MCF 10A (cell line): ENCODE measurements at regions of chr9 and their contacts with region 1.

Region 1: GRCh38 chr9:98823666-98824334 is 16.3 kb downstream of the GALNT12 start:
- DNase-seq: no peak
- H3K4me3 Mint-ChIP-seq: no peak overlapping the region
- H3K27ac Mint-ChIP-seq: no peak overlapping the region
- H3K4me1 Mint-ChIP-seq: no peaks in the 10 kb centered on the region
- H3K27me3 Mint-ChIP-seq: peaks cover 30% of the 10 kb centered on the region
- CTCF ChIP-seq: no peak

Region 2: DNA sequence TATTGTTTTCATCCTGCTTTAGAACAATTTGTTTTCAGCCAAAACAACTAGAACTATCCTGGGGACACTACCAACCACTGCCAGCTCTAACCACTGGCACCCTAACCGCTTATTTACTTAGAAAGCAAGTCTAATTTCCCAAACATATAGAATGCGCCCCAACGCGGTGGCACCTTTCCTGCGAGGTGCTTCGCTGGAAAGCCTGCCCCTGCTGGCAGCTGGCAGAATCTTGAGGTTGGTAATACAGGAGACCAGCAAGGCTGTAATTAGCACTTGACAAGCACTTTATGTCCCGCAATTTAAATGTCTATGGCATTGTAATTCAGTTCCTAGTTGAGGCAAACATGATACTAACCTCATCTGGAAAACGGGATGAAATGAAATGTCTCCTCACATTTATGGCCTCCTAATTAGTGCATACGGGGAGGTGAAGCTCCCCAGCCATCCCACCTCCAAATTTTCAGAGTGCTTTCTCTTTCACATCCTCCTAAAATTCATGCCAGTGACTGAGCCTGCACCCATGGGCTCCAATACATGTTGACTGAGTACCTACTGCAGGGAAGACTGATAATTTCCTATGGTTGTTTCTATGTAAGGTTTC is 145.5 kb before region 1 on chr9:
- CTCF ChIA-PET with region 1: no interaction called
- POLR2A ChIA-PET with region 1: no interaction called
- intact Hi-C with region 1: no loop called
- DNase-seq: peak; percentile 37
- H3K4me3 Mint-ChIP-seq: no peak overlapping the region
- H3K27ac Mint-ChIP-seq: no peak overlapping the region
- H3K4me1 Mint-ChIP-seq: no peaks in the 10 kb centered on the region
- H3K27me3 Mint-ChIP-seq: peaks cover 14% of the 10 kb centered on the region
- CTCF ChIP-seq: peak; percentile 45

Region 3: DNA sequence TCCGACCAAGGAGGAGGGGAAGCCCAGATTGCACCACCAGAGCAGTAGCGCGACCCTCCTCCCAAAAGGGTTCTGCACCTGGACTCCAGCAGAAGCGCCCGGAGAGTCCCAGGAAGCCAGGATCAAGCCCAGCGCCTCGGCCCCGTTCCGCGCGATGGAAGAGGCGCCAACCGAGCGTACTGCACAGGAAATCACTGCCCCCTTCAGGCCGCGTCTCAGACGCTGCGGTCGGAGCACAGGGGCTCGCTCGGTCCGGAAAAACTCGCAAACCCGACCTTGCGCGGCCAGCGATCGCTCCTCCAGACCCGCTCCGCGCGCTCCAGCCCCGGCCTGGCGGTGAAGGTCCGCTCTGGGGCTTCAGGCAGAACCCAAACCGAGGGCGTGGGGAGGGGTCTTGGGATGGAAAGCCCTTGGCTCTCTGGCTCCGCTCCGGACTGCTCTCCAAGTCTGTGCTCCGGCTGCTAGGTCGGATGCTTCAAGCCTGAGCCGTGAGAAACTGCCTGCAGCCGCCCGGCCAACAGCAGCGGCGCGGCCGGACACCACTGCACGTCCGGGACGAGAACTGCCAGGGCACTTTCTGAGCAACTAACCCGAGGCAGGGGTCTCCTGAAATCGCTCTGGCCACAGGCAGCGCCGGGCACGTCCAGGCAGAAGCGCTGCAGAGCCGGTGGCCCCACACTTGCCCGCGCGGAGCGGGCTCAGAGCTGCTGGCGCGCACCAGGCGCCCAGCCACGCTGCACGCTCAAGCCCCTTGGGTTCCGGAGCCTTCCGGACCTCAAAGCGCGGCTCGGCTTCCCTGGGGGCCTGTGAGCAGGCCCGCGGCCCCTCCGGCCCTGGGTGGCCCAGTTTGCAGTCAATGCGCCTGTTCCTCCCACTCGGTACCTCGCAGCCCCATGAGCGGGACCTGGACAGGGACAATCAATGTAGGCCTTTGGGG is 116.4 kb before region 1 on chr9:
- CTCF ChIA-PET with region 1: no interaction called
- POLR2A ChIA-PET with region 1: no interaction called
- intact Hi-C with region 1: no loop called
- DNase-seq: peak; percentile 30
- H3K4me3 Mint-ChIP-seq: no peak overlapping the region
- H3K27ac Mint-ChIP-seq: no peak overlapping the region
- H3K4me1 Mint-ChIP-seq: no peaks in the 10 kb centered on the region
- H3K27me3 Mint-ChIP-seq: peaks cover 55% of the 10 kb centered on the region
- CTCF ChIP-seq: peak; percentile 27

Region 4: GRCh38 chr9:98766586-98766985 is 57.2 kb before region 1 on chr9:
- CTCF ChIA-PET with region 1: no interaction called
- POLR2A ChIA-PET with region 1: no interaction called
- intact Hi-C with region 1: loop called (anchors 10 kb)
- DNase-seq: peak; percentile 69
- H3K4me3 Mint-ChIP-seq: no peak overlapping the region
- H3K27ac Mint-ChIP-seq: peak overlapping the region; percentile 70
- H3K4me1 Mint-ChIP-seq: peaks cover 21% of the 10 kb centered on the region
- H3K27me3 Mint-ChIP-seq: no peaks in the 10 kb centered on the region
- CTCF ChIP-seq: no peak

Region 5: GRCh38 chr9:99221621-99222415 is 398.0 kb after region 1 on chr9 and contains the starts of genes ALG2 and SEC61B:
- CTCF ChIA-PET with region 1: no interaction called
- POLR2A ChIA-PET with region 1: no interaction called
- intact Hi-C with region 1: no loop called
- DNase-seq: peak; percentile 92
- H3K4me3 Mint-ChIP-seq: peak within 1 kb of the TSS; percentile 98
- H3K27ac Mint-ChIP-seq: peak within 1 kb of the TSS; percentile 100
- H3K4me1 Mint-ChIP-seq: peaks cover 50% of the 10 kb centered on the region
- H3K27me3 Mint-ChIP-seq: no peaks in the 10 kb centered on the region
- CTCF ChIP-seq: no peak
- total RNA-seq, gene ALG2: 54.6 and 54.7 TPM in 2 replicates
- total RNA-seq, gene SEC61B: 238 and 324 TPM in 2 replicates

Region 6: GRCh38 chr9:99307851-99308250 is 484.1 kb after region 1 on chr9:
- CTCF ChIA-PET with region 1: no interaction called
- POLR2A ChIA-PET with region 1: no interaction called
- intact Hi-C with region 1: no loop called
- DNase-seq: no peak
- H3K4me3 Mint-ChIP-seq: no peak overlapping the region
- H3K27ac Mint-ChIP-seq: no peak overlapping the region
- H3K4me1 Mint-ChIP-seq: no peaks in the 10 kb centered on the region
- H3K27me3 Mint-ChIP-seq: peaks cover 11% of the 10 kb centered on the region
- CTCF ChIP-seq: no peak